ENCODE measurements at regions of chr1 and their contacts with region 1.

Region 1: DNA sequence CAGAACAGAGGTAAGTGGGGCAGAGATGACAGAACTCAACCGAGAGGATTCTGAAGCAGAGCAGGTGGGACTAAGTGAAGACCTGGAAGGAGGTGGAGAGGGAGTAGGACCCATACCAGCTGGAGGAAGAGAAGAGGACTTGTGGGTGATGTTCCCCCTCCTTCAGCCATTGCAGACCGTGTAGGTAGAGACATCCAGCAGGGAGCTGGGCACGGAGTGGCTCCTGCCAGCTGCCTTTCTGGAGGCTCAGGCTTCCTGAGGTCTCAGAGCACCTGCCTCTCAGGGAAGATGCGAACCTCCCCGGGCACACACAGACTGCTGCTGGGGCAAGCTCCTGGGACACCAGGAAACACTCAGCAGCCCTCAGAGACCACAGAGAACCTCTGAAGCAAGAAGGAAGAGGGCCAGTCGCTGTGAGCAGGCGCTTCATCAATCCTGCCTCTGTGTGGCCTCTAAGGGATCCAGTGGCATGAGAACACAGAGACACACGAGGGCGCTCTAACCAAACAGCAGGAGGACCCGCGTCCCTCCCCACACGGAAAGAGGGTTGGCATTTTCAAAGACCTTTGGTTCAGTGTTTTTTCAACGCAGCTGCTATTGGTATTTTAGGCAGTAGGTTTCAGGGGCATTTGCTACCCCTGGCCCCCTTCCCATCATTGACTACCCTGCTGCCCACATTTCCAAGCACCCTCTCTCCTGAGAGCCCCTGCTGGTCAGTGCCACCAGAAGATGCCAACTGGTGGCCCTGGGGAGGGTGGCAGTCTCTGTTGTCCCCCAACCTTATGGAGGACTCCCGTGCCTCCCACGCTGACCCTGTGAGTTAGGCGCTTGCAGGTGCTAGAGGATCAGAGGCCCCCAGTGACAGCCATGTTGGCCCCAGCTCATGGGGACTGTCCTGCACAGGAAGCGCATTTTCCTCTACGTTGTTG is 89.6 kb upstream of the EDN2 start:
- DNase-seq: peak; percentile 77 to 87 (median 82)
- ATAC-seq: peak; percentile 62 to 95 (median 92)
- H3K4me3 ChIP-seq: no peak overlapping the region
- H3K27ac ChIP-seq: no peak overlapping the region
- H3K4me1 ChIP-seq: peaks cover 0 to 10% (median 3%) of the 10 kb centered on the region in 12 donors
- H3K27me3 ChIP-seq: no peaks in the 10 kb centered on the region
- CTCF ChIP-seq: peak; percentile 83 to 93 (median 88)
- POLR2A ChIP-seq: no peak

Region 2: GRCh38 chr1:41516168-41517061 is 57.6 kb before region 1 on chr1:
- intact Hi-C with region 1: loop called in 5 of 10 experiments (anchors 5 to 10 kb)
- DNase-seq: peak; percentile 89 to 94 (median 92)
- ATAC-seq: peak; percentile 90 to 95 (median 94)
- H3K4me3 ChIP-seq: peak overlapping the region in 11 of 12 donors; percentile 32 to 59 (median 53)
- H3K27ac ChIP-seq: peak overlapping the region in 6 of 12 donors; percentile 23 to 63 (median 46)
- H3K4me1 ChIP-seq: peaks cover 0 to 33% (median 17%) of the 10 kb centered on the region in 12 donors
- H3K27me3 ChIP-seq: no peaks in the 10 kb centered on the region
- CTCF ChIP-seq: peak; percentile 86 to 98 (median 94)
- POLR2A ChIP-seq: peak in 1 of 2 donors; percentile 22

Region 3: DNA sequence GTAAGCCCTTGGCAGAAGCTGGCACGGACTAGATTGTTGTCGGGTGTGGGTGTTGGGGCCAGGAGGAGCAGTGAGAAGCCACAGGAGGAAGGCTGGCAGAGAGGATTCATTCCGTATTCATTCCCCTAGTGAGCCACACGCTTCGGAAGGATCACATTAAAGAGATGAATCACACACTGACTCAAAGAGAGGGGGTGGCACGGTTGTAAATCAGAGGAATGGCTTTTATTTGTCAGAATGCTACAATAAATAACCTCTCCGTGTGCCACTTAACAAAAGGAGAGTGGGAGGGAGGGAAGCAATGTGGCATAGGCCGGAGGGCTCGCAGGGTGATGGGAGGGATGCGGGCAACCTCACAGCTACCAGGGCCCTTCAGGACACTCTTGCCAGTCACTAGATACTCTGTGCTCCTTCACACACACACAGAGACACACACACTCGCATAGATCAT is 209.2 kb after region 1 on chr1:
- intact Hi-C with region 1: loop called in 4 of 10 experiments (anchors 5 to 10 kb)
- DNase-seq: no peak
- ATAC-seq: peak in 1 of 4 donors; percentile 22
- H3K4me3 ChIP-seq: no peak overlapping the region
- H3K27ac ChIP-seq: no peak overlapping the region
- H3K4me1 ChIP-seq: peaks cover 0 to 15% (median 0%) of the 10 kb centered on the region in 12 donors
- H3K27me3 ChIP-seq: no peaks in the 10 kb centered on the region
- CTCF ChIP-seq: no peak
- POLR2A ChIP-seq: no peak

Region 4: GRCh38 chr1:41919764-41920397 is 345.8 kb after region 1 on chr1:
- intact Hi-C with region 1: loop called in 1 of 10 experiments (anchors 10 kb)
- DNase-seq: peak; percentile 40 to 85 (median 62)
- ATAC-seq: peak; percentile 71 to 87 (median 84)
- H3K4me3 ChIP-seq: peak overlapping the region in 9 of 12 donors; percentile 24 to 48 (median 31)
- H3K27ac ChIP-seq: peak overlapping the region in 5 of 12 donors; percentile 25 to 40 (median 36)
- H3K4me1 ChIP-seq: peaks cover 3 to 48% (median 29%) of the 10 kb centered on the region in 12 donors
- H3K27me3 ChIP-seq: peaks cover 0 to 15% (median 0%) of the 10 kb centered on the region in 9 donors
- CTCF ChIP-seq: no peak
- POLR2A ChIP-seq: peak in 1 of 2 donors; percentile 19

Region 5: GRCh38 chr1:42146626-42147320 is 572.7 kb after region 1 on chr1:
- intact Hi-C with region 1: loop called in 4 of 10 experiments (anchors 10 kb)
- DNase-seq: peak; percentile 52 to 79 (median 57)
- ATAC-seq: peak; percentile 47 to 77 (median 60)
- H3K4me3 ChIP-seq: no peak overlapping the region
- H3K27ac ChIP-seq: no peak overlapping the region
- H3K4me1 ChIP-seq: peaks cover 0 to 6% (median 0%) of the 10 kb centered on the region in 12 donors
- H3K27me3 ChIP-seq: peaks cover 0 to 26% (median 7%) of the 10 kb centered on the region in 9 donors
- CTCF ChIP-seq: peak; percentile 57 to 83 (median 78)
- POLR2A ChIP-seq: no peak